ENCODE measurements at regions of chr1 and their contacts with region 1.

Region 1: GRCh38 chr1:222455188-222455879 is 92.6 kb downstream of the HHIPL2 start:
- DNase-seq: peak; percentile 68
- H3K4me3 ChIP-seq: peak overlapping the region; percentile 3 to 5; a peak in 3 of 4 replicates
- H3K27ac ChIP-seq: peak overlapping the region in 1 of 2 experiments; percentile 67; a peak in 2 of 4 replicates
- H3K4me1 ChIP-seq: peaks cover 0 to 16% of the 10 kb centered on the region in 2 experiments; a peak in 2 of 4 replicates
- H3K27me3 ChIP-seq: no peaks in the 10 kb centered on the region
- CTCF ChIP-seq: peak; percentile 98
- EP300 ChIP-seq: no peak
- RAD21 ChIP-seq: peak; percentile 92

Region 2: GRCh38 chr1:221263831-221264767 is 1191.2 kb before region 1 on chr1:
- CTCF ChIA-PET with region 1: interaction called, 18 read pairs
- POLR2A ChIA-PET with region 1: no interaction called
- DNase-seq: peak; percentile 50
- H3K4me3 ChIP-seq: no peak overlapping the region
- H3K27ac ChIP-seq: peak overlapping the region; percentile 53 to 85; a peak in 3 of 4 replicates
- H3K4me1 ChIP-seq: peaks cover 0 to 4% of the 10 kb centered on the region in 2 experiments; a peak in 2 of 4 replicates
- H3K27me3 ChIP-seq: no peaks in the 10 kb centered on the region
- CTCF ChIP-seq: peak; percentile 83
- EP300 ChIP-seq: peak in 1 of 2 experiments; percentile 51; a peak in 2 of 4 replicates
- RAD21 ChIP-seq: peak; percentile 87

Region 3: DNA sequence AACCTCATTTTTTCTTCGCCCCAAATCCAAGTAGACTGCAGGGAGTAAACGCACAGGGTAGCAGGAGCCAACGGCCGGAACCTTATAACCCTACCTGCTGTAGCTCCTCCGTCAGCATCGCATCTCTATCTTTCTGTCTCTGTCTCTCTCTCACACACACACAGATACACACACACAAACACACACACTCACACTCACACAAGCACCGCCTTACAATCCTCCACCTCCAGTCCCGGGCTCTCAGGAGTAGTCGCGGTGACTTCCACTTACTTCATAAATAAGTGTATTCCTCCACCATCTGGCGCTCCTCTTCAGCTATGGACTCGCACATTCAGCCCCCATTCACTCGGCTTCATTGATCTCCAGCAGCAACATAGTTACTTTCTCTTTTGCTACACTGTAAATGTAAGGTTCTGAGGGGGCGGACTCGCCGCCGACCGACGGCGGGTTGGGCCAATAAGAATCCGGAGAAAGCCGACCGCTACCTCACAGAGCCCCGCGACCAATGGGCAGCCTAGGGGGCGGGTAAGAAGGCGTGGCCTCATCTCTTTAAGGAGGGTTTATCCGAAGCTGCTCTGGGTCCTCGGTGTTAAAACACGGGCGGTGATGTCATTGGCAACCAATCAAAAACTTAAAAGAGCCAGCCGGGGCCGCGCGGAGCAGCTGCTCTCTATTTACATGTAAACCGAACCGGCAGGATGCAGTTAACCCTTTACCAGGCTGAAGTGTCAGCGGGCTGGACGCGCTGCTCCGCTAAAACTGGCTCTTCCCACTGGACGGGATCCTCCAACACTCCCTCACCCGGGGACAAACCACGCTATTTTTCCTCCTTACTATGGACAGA is 713.4 kb before region 1 on chr1 and contains the start of gene DUSP10:
- CTCF ChIA-PET with region 1: interaction called, 18 read pairs
- POLR2A ChIA-PET with region 1: no interaction called
- DNase-seq: peak; percentile 95
- H3K4me3 ChIP-seq: peak within 1 kb of the TSS; percentile 57 to 94
- H3K27ac ChIP-seq: peak within 1 kb of the TSS; percentile 96 to 98
- H3K4me1 ChIP-seq: peaks cover 0 to 19% of the 10 kb centered on the region in 2 experiments; a peak in 2 of 4 replicates
- H3K27me3 ChIP-seq: no peaks in the 10 kb centered on the region
- CTCF ChIP-seq: no peak
- EP300 ChIP-seq: peak; percentile 10 to 30; a peak in 1 of 4 replicates
- RAD21 ChIP-seq: peak; percentile 44
- polyA plus RNA-seq, gene DUSP10: 6.4 and 6.8 TPM in 2 replicates

Region 4: GRCh38 chr1:222124602-222125001 is 330.7 kb before region 1 on chr1:
- CTCF ChIA-PET with region 1: interaction called, 14 read pairs
- POLR2A ChIA-PET with region 1: no interaction called
- DNase-seq: no peak
- H3K4me3 ChIP-seq: no peak overlapping the region
- H3K27ac ChIP-seq: no peak overlapping the region
- H3K4me1 ChIP-seq: no peaks in the 10 kb centered on the region
- H3K27me3 ChIP-seq: no peaks in the 10 kb centered on the region
- CTCF ChIP-seq: peak; percentile 33; the same call in 1 of the 2 replicates
- EP300 ChIP-seq: no peak
- RAD21 ChIP-seq: no peak

Region 5: DNA sequence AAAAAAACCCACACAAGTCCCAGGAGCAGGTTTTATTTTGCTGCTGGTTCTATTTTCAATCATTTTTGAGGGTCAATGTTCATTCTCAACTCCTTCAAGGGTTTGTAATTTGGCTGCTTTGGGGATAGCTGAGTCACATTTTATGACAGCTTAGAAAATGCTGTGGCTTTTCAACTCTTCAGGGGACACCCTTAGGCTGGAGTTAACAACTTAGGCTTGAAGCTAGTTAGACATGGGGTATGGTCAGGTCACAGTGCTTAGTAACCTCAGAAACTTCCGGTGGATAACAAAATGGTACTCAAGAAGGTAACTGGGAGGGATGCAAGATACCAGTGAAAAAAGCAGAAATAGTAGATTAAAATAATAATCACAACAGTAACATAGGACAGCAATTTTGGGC is 216.2 kb before region 1 on chr1:
- CTCF ChIA-PET with region 1: interaction called, 11 read pairs
- POLR2A ChIA-PET with region 1: no interaction called
- DNase-seq: no peak
- H3K4me3 ChIP-seq: no peak overlapping the region
- H3K27ac ChIP-seq: no peak overlapping the region
- H3K4me1 ChIP-seq: no peaks in the 10 kb centered on the region
- H3K27me3 ChIP-seq: no peaks in the 10 kb centered on the region
- CTCF ChIP-seq: no peak
- EP300 ChIP-seq: no peak
- RAD21 ChIP-seq: no peak

Region 6: GRCh38 chr1:222465211-222466041 is 10.1 kb after region 1 on chr1:
- CTCF ChIA-PET with region 1: interaction called, 69 read pairs
- POLR2A ChIA-PET with region 1: no interaction called
- DNase-seq: peak; percentile 96
- H3K4me3 ChIP-seq: peak overlapping the region; percentile 64 to 65
- H3K27ac ChIP-seq: peak overlapping the region; percentile 94 to 97
- H3K4me1 ChIP-seq: peaks cover 0 to 4% of the 10 kb centered on the region in 2 experiments; a peak in 2 of 4 replicates
- H3K27me3 ChIP-seq: no peaks in the 10 kb centered on the region
- CTCF ChIP-seq: peak; percentile 97
- EP300 ChIP-seq: no peak; a peak in 1 of 4 replicates
- RAD21 ChIP-seq: peak; percentile 95

Region 7: DNA sequence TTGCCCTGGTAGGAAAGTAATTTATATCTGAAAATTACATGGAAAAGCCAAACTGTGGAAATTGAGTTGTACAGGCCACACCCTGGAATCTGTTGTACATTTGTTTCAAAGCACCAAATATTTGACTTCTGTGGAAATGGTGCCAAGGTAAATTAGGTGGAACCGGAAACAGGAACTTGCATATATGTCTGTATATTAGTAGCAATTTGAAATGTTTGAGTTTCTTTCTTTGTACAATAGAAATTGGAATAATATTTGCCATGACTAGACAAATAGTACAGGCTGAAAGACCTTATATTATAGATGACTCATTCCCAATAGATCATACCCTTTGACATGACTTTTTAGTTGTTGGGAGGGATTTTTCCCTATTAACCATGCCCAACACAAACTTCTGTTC is 144.9 kb after region 1 on chr1:
- CTCF ChIA-PET with region 1: no interaction called
- POLR2A ChIA-PET with region 1: no interaction called
- DNase-seq: no peak
- H3K4me3 ChIP-seq: no peak overlapping the region
- H3K27ac ChIP-seq: no peak overlapping the region
- H3K4me1 ChIP-seq: no peaks in the 10 kb centered on the region
- H3K27me3 ChIP-seq: no peaks in the 10 kb centered on the region
- CTCF ChIP-seq: no peak
- EP300 ChIP-seq: no peak
- RAD21 ChIP-seq: no peak

Measured in SK-N-SH (cell line).